H1 (cell line): ENCODE measurements at regions of chr16 and their contacts with region 1.

Region 1: DNA sequence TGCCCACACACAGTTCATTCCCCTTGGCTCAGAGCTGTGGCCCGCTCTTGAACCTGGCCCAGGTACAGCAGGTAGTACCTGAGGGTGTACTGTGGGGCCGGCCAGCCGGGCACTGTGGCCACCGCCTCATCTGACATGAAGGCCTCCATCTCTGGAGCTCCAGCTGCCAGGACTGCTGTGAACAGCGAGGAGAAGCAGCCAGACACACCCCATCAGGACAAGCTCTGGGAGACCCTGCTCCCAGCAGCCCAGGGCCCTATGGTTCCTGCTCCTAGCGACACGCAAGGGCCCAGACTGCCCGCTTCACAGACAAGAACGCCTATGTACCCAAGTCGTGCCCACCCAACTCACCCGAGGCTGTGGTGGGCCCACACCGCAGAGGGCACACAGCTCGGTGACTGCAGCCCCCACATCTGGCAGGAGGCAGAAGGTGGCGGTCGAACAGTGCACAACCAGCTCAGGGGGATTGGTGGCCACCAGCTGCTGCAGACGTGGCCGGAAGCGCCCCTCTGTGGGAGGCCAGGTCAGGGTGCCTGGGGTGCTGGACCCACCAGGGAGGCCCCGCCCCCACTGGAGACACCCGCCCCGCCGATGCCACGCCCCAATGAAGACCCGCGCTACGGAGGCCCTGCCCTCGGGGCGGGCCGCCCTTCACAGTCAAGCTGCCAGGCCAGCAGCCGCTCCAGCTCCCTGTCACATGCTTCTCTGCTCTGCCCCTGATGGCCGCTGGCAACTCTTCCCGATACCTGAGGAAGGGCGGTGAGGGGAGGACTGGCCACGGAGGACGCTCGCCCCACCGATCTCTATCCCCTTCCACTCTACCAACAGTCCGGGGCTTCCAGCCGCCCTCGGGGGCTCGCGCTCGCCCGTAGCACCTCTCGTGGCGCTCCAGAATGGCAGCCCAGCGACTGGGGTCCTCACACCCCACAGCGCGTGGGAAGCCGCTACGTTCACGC is 1.1 kb upstream of the STUB1 start:
- DNase-seq: peak in 1 of 2 experiments; percentile 79
- H3K4me3 ChIP-seq: peak overlapping the region; percentile 32 to 73 (median 41); a peak in 7 of 8 replicates
- H3K27ac ChIP-seq: no peak overlapping the region
- H3K4me1 ChIP-seq: peaks cover 0 to 42% (median 34%) of the 10 kb centered on the region in 4 experiments; a peak in 6 of 7 replicates
- H3K27me3 ChIP-seq: peaks cover 0 to 2% (median 0%) of the 10 kb centered on the region in 4 experiments; a peak in 2 of 7 replicates
- CTCF ChIP-seq: no peak
- EP300 ChIP-seq: no peak
- POLR2A ChIP-seq: no peak
- RAD21 ChIP-seq: no peak

Region 2: GRCh38 chr16:636206-637080 is 42.7 kb before region 1 on chr16 and contains the start of gene METTL26:
- CTCF ChIA-PET with region 1: interaction called, 3 read pairs
- POLR2A ChIA-PET with region 1: interaction called, 10 read pairs
- DNase-seq: peak in 1 of 2 experiments; percentile 96
- H3K4me3 ChIP-seq: peak within 1 kb of the TSS; percentile 73 to 89 (median 77)
- H3K27ac ChIP-seq: peak within 1 kb of the TSS; percentile 35; the same call in 1 of the 2 replicates
- H3K4me1 ChIP-seq: peaks cover 0 to 29% (median 19%) of the 10 kb centered on the region in 4 experiments; a peak in 6 of 7 replicates
- H3K27me3 ChIP-seq: no peaks in the 10 kb centered on the region
- CTCF ChIP-seq: no peak
- EP300 ChIP-seq: no peak
- POLR2A ChIP-seq: peak in 1 of 2 experiments; percentile 51; a peak in 2 of 3 replicates
- RAD21 ChIP-seq: 0 out of 4 replicates have a peak, but pooled peaks of 1 of the 2 experiments have one; percentile 0
- total RNA-seq, gene METTL26: 100 and 108 TPM in 2 replicates

Region 3: GRCh38 chr16:648781-649589 is 30.2 kb before region 1 on chr16 and contains the start of gene WDR90:
- CTCF ChIA-PET with region 1: interaction called, 8 read pairs
- POLR2A ChIA-PET with region 1: interaction called, 14 read pairs
- DNase-seq: peak in 1 of 2 experiments; percentile 97
- H3K4me3 ChIP-seq: peak within 1 kb of the TSS; percentile 59 to 76 (median 68)
- H3K27ac ChIP-seq: peak within 1 kb of the TSS; percentile 35; the same call in 1 of the 2 replicates
- H3K4me1 ChIP-seq: peaks cover 0 to 4% (median under 1%) of the 10 kb centered on the region in 4 experiments; a peak in 4 of 7 replicates
- H3K27me3 ChIP-seq: no peaks in the 10 kb centered on the region
- CTCF ChIP-seq: no peak
- EP300 ChIP-seq: no peak
- POLR2A ChIP-seq: peak in 1 of 2 experiments; percentile 49; a peak in 1 of 3 replicates
- RAD21 ChIP-seq: no peak
- total RNA-seq, gene WDR90: 44.4 and 47.2 TPM in 2 replicates

Region 4: GRCh38 chr16:667780-668518 is 11.2 kb before region 1 on chr16 and contains the start of gene RHOT2:
- CTCF ChIA-PET with region 1: interaction called, 11 read pairs
- POLR2A ChIA-PET with region 1: interaction called, 214 read pairs
- DNase-seq: peak; percentile 47 to 94
- H3K4me3 ChIP-seq: peak within 1 kb of the TSS; percentile 71 to 89 (median 76)
- H3K27ac ChIP-seq: peak within 1 kb of the TSS; percentile 23; the same call in 1 of the 2 replicates
- H3K4me1 ChIP-seq: peaks cover 0 to 8% (median 5%) of the 10 kb centered on the region in 4 experiments; a peak in 5 of 7 replicates
- H3K27me3 ChIP-seq: no peaks in the 10 kb centered on the region
- CTCF ChIP-seq: peak in 2 of 3 experiments; percentile 85 to 99; a peak in 3 of 4 replicates
- EP300 ChIP-seq: peak in 1 of 2 experiments; percentile 82; a peak in 1 of 3 replicates
- POLR2A ChIP-seq: no peak; a peak in 1 of 3 replicates
- RAD21 ChIP-seq: peak; percentile 34 to 65; a peak in 3 of 4 replicates
- total RNA-seq, gene RHOT2: 149 and 162 TPM in 2 replicates

Region 5: DNA sequence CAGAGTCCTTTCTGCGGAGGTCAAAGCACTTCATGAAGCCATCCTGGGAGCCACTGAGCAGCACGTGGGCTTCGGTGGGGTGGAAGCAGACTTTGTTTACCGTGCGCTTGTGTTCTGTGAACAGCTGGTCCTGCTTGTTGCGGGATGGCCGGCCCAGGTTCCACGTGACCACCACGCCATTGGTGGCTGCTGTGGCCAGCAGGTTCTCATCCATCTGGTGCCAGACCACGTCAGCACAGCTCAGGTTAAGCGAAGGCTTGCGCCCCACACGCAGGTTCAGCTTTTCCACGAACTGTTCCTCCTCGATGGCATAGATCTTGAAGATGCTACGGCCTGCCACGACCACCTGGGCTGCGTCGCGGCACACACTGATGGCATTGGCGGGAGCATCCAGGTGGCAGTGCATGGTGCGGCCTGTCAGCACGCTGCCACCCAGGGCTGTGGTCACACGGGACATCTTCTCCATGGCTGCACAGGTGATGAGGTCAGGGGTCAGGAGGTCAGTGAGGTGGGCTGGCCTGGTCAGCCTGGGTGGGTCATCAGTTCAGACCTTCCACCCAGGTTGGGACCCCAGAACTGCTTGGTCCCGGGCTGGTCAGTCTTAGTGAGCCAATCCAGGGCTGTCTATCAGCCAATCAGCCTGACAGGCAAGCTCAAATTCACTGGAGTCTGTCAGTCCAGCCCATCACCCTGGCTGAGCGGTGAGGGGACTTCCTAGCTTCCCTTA is 10.2 kb after region 1 on chr16:
- CTCF ChIA-PET with region 1: interaction called, 75 read pairs
- POLR2A ChIA-PET with region 1: interaction called, 214 read pairs
- DNase-seq: no peak
- H3K4me3 ChIP-seq: peak overlapping the region; percentile 76 to 90 (median 82)
- H3K27ac ChIP-seq: no peak overlapping the region
- H3K4me1 ChIP-seq: peaks cover 0 to 16% (median 7%) of the 10 kb centered on the region in 4 experiments; a peak in 5 of 7 replicates
- H3K27me3 ChIP-seq: peaks cover 0 to 29% (median 13%) of the 10 kb centered on the region in 4 experiments; a peak in 5 of 7 replicates
- CTCF ChIP-seq: no peak
- EP300 ChIP-seq: no peak
- POLR2A ChIP-seq: no peak
- RAD21 ChIP-seq: no peak

Region 6: GRCh38 chr16:778985-779416 is 99.9 kb after region 1 on chr16:
- CTCF ChIA-PET with region 1: no interaction called
- POLR2A ChIA-PET with region 1: no interaction called
- DNase-seq: no peak
- H3K4me3 ChIP-seq: no peak overlapping the region
- H3K27ac ChIP-seq: no peak overlapping the region
- H3K4me1 ChIP-seq: no peaks in the 10 kb centered on the region
- H3K27me3 ChIP-seq: peaks cover 0 to 3% (median under 1%) of the 10 kb centered on the region in 4 experiments; a peak in 3 of 7 replicates
- CTCF ChIP-seq: no peak
- EP300 ChIP-seq: no peak
- POLR2A ChIP-seq: no peak
- RAD21 ChIP-seq: no peak